ENCODE measurements at regions of chr5 and their contacts with region 1.

Region 1: DNA sequence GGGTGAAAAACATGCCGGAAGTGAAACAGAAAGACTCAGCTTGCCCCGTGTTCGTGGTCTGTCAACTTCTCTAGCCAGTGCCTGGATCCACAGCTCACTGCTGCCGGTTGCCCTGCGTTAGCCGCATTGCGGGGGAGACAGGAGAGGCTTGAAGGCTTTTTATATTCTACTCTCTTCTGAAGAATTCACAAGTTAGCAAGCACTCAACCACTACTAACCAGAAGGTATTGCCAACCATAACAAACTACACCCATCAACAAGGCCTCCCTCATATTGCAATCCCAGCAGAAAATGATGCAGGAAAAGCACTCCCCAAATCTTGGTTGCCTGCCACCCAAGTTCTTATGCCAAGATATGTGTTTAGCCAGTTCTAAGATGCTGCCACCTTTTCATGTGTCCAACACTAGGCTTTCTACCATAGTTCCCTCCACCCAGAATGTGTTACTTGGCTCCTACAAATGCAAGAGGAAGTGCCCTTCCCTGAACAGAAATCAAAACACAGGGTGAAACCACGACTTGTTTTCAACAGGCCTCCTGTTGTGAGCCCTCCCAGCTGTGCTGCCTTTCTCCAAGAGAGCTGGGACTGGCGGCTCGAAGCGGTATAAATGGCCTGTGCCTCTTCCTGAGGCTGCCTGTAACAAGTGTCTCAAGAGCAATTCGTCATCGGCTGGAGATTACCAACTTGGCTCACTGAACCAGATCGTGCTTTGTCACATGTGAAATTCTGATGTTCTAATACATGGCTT is 129.0 kb downstream of the SNX18 start:
- DNase-seq: peak; percentile 18 to 81 (median 70)
- ATAC-seq: peak; percentile 88
- H3K4me3 ChIP-seq: peak overlapping the region; percentile 44
- H3K4me3 Mint-ChIP-seq: peak overlapping the region; percentile 63 to 85 (median 80)
- H3K27ac ChIP-seq: peak overlapping the region; percentile 64
- H3K27ac Mint-ChIP-seq: peak overlapping the region; percentile 94 to 99 (median 97)
- H3K4me1 ChIP-seq: peaks cover 44 to 48% of the 10 kb centered on the region in 2 donors
- H3K4me1 Mint-ChIP-seq: peaks cover 41 to 72% (median 60%) of the 10 kb centered on the region in 7 donors
- H3K27me3 ChIP-seq: no peaks in the 10 kb centered on the region
- H3K27me3 Mint-ChIP-seq: no peaks in the 10 kb centered on the region

Region 2: DNA sequence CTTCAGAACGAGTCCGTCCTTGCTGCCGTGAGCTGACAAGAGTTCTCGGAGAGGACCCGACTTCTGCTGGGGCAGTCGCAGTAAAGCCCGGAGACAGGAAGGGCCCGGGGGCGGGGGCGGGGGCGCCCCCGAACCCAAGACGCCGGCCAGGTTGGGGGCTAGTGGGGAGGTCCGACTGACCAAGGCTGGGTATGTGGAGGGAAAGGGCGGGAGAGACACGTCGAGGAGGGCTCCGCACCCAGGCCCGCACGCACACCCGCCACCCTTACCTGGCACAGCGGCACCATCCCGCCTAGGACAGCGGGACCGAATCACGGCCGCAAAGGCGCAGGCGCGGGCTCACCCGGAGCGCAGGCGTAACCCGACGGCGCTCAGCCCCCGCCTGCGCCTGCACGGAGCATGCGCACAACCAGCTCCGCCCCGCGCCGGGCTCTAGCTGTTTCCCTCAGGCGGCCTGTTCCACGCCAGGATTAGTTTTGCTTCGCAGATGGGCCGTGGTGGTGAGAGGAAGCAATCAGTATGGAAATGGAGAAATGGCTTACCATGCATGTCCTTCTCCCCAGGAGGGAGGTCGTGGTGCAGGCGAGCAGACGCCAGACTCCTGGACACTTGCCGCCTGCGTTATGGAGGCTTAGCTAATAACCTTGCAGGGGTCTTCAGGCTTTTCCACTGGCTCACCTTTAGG is 1536.9 kb before region 1 on chr5 and contains the start of gene MOCS2:
- CTCF ChIA-PET with region 1: no interaction called
- POLR2A ChIA-PET with region 1: no interaction called
- intact Hi-C with region 1: loop called in 1 of 2 experiments (anchors 1 kb)
- DNase-seq: peak; percentile 87 to 93 (median 91)
- ATAC-seq: peak; percentile 98
- H3K4me3 ChIP-seq: peak within 1 kb of the TSS; percentile 88
- H3K4me3 Mint-ChIP-seq: peak within 1 kb of the TSS; percentile 93 to 99 (median 96)
- H3K27ac ChIP-seq: peak within 1 kb of the TSS; percentile 84
- H3K27ac Mint-ChIP-seq: peak within 1 kb of the TSS; percentile 86 to 98 (median 93)
- H3K4me1 ChIP-seq: peaks cover 6 to 7% of the 10 kb centered on the region in 2 donors
- H3K4me1 Mint-ChIP-seq: peaks cover 29 to 64% (median 60%) of the 10 kb centered on the region in 7 donors
- H3K27me3 ChIP-seq: no peaks in the 10 kb centered on the region
- H3K27me3 Mint-ChIP-seq: no peaks in the 10 kb centered on the region
- total RNA-seq, gene MOCS2: 12.8 to 29.8 (median 20.9) TPM

Region 3: DNA sequence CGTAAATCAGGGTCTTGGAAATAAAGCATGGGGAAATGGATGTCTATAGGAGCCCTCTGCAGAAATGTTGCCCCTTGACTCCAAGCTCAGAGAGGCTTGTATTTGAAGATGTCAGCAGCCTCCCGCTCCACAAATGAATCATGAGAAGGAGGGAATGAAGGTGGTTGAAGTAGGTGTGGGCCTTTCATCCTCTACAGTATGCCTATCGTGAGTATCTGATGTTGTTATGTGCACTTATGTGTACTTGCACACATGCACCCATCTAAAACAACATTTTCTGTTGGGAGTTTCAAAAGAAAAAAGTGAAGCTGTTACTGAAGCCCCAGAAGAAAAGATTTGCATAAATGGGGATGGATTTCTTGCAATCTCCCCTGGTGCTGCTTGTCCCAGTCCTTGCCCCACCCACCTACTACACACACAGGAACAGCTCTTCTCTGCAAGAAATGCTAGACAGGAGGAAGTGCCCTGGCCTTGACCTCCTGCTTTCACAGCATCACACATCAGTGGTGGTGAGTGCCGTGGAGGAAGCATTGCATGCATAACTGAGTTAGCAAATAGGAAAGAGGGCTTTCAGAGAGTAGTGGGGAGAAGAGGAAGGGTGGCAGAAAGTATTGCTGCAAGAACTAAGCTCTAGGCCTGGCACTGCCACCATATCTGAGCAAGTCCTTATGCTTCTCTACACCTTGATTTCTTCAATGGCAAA is 27.1 kb after region 1 on chr5:
- CTCF ChIA-PET with region 1: interaction called, 4 read pairs
- POLR2A ChIA-PET with region 1: interaction called, 8 read pairs
- intact Hi-C with region 1: loop called (anchors 1 kb)
- DNase-seq: peak in 7 of 9 donors; percentile 32 to 52 (median 39)
- ATAC-seq: peak; percentile 88
- H3K4me3 ChIP-seq: no peak overlapping the region
- H3K4me3 Mint-ChIP-seq: peak overlapping the region in 9 of 10 donors; percentile 9 to 67 (median 45)
- H3K27ac ChIP-seq: no peak overlapping the region
- H3K27ac Mint-ChIP-seq: peak overlapping the region; percentile 11 to 83 (median 56)
- H3K4me1 ChIP-seq: peaks cover 35 to 36% of the 10 kb centered on the region in 2 donors
- H3K4me1 Mint-ChIP-seq: peaks cover 40 to 74% (median 58%) of the 10 kb centered on the region in 7 donors
- H3K27me3 ChIP-seq: no peaks in the 10 kb centered on the region
- H3K27me3 Mint-ChIP-seq: peaks cover 0 to 5% (median 0%) of the 10 kb centered on the region in 5 donors

Region 4: GRCh38 chr5:54719384-54720283 is 73.1 kb after region 1 on chr5:
- CTCF ChIA-PET with region 1: no interaction called
- POLR2A ChIA-PET with region 1: no interaction called
- intact Hi-C with region 1: loop called in 1 of 2 experiments (anchors 1 kb)
- DNase-seq: no peak
- ATAC-seq: no peak
- H3K4me3 ChIP-seq: no peak overlapping the region
- H3K4me3 Mint-ChIP-seq: no peak overlapping the region
- H3K27ac ChIP-seq: no peak overlapping the region
- H3K27ac Mint-ChIP-seq: peak overlapping the region in 1 of 9 donors; percentile 14
- H3K4me1 ChIP-seq: no peaks in the 10 kb centered on the region
- H3K4me1 Mint-ChIP-seq: peaks cover 0 to 33% (median 5%) of the 10 kb centered on the region in 7 donors
- H3K27me3 ChIP-seq: no peaks in the 10 kb centered on the region
- H3K27me3 Mint-ChIP-seq: peaks cover 0 to 5% (median 0%) of the 10 kb centered on the region in 5 donors

Region 5: DNA sequence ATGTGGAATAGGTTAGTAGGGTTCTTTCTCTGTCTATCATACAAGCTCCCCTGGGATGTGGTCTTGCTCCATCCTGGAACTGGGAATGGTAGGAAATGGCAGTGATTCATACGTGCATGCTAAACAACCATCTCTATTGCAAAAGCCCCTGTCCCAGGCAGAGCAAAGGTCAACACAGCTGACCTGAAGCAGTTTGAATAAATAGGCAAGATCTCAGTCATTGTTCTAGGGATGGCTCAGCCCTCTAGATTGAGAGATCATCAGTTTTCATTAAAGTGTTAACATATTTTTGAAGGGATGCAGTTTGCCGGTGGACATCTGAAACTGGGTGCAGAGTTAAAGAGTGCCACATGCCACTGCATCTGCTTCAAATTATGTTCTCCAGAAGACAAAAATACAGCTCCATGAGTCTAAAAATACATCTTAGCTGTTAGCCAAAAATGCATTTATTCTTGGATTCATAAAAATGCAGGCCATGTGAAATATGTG is 114.7 kb after region 1 on chr5:
- CTCF ChIA-PET with region 1: no interaction called
- POLR2A ChIA-PET with region 1: no interaction called
- intact Hi-C with region 1: loop called in 1 of 2 experiments (anchors 5 kb)
- DNase-seq: no peak
- ATAC-seq: no peak
- H3K4me3 ChIP-seq: no peak overlapping the region
- H3K4me3 Mint-ChIP-seq: no peak overlapping the region
- H3K27ac ChIP-seq: no peak overlapping the region
- H3K27ac Mint-ChIP-seq: no peak overlapping the region
- H3K4me1 ChIP-seq: peaks cover 7 to 8% of the 10 kb centered on the region in 2 donors
- H3K4me1 Mint-ChIP-seq: peaks cover 9 to 26% (median 10%) of the 10 kb centered on the region in 7 donors
- H3K27me3 ChIP-seq: no peaks in the 10 kb centered on the region
- H3K27me3 Mint-ChIP-seq: peaks cover 0 to 8% (median 0%) of the 10 kb centered on the region in 5 donors

Region 6: DNA sequence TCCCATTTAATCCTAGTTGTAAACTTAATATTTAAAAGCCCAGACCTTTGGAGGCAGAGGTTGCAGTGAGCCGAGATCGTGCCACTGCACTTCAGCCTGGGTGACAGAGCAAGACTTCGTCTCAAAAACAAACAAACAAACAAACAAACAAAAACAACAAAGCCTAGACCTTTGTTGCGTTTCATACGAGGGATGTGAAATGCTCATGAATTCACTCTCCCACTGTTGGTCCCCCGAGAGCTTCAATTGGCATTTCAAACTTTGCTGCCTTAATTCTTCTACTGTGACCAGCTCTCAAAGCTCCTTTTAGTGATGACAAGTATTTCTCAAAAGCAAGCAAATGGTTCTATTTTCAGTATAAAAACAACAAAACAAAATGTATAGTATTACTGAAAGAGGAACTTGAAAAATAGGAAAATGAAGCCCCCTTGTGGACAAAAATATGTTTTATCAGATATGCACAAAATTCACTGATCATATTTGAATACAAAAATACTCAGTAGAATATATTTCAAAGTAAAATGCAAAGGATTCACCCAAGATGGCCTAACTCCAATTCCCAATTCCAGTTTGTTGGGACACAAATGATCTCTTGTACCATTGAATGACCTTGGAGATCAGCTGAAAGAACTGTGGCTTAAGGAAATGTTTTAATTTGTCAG is 198.5 kb after region 1 on chr5:
- CTCF ChIA-PET with region 1: interaction called, 5 read pairs
- POLR2A ChIA-PET with region 1: interaction called, 15 read pairs
- intact Hi-C with region 1: loop called (anchors 1 to 10 kb)
- DNase-seq: peak in 6 of 9 donors; percentile 38 to 67 (median 60)
- ATAC-seq: peak; percentile 34
- H3K4me3 ChIP-seq: no peak overlapping the region
- H3K4me3 Mint-ChIP-seq: peak overlapping the region in 7 of 10 donors; percentile 2 to 68 (median 52)
- H3K27ac ChIP-seq: no peak overlapping the region
- H3K27ac Mint-ChIP-seq: peak overlapping the region in 6 of 9 donors; percentile 45 to 63 (median 56)
- H3K4me1 ChIP-seq: no peaks in the 10 kb centered on the region
- H3K4me1 Mint-ChIP-seq: peaks cover 0 to 21% (median 5%) of the 10 kb centered on the region in 7 donors
- H3K27me3 ChIP-seq: no peaks in the 10 kb centered on the region
- H3K27me3 Mint-ChIP-seq: peaks cover 8 to 18% (median 12%) of the 10 kb centered on the region in 5 donors

Region 7: GRCh38 chr5:55096861-55097260 is 450.3 kb after region 1 on chr5:
- CTCF ChIA-PET with region 1: no interaction called
- POLR2A ChIA-PET with region 1: no interaction called
- intact Hi-C with region 1: loop called in 1 of 2 experiments (anchors 5 kb)
- DNase-seq: peak in 7 of 9 donors; percentile 61 to 83 (median 74)
- ATAC-seq: peak; percentile 85
- H3K4me3 ChIP-seq: peak overlapping the region; percentile 33
- H3K4me3 Mint-ChIP-seq: peak overlapping the region; percentile 16 to 79 (median 70)
- H3K27ac ChIP-seq: peak overlapping the region; percentile 59
- H3K27ac Mint-ChIP-seq: peak overlapping the region; percentile 88 to 100 (median 94)
- H3K4me1 ChIP-seq: peaks cover 42 to 52% of the 10 kb centered on the region in 2 donors
- H3K4me1 Mint-ChIP-seq: peaks cover 50 to 95% (median 90%) of the 10 kb centered on the region in 7 donors
- H3K27me3 ChIP-seq: no peaks in the 10 kb centered on the region
- H3K27me3 Mint-ChIP-seq: no peaks in the 10 kb centered on the region

Region 8: GRCh38 chr5:55497712-55498111 is 851.2 kb after region 1 on chr5:
- CTCF ChIA-PET with region 1: no interaction called
- POLR2A ChIA-PET with region 1: no interaction called
- intact Hi-C with region 1: no loop called
- DNase-seq: no peak
- ATAC-seq: no peak
- H3K4me3 ChIP-seq: no peak overlapping the region
- H3K4me3 Mint-ChIP-seq: no peak overlapping the region
- H3K27ac ChIP-seq: no peak overlapping the region
- H3K27ac Mint-ChIP-seq: peak overlapping the region in 1 of 9 donors; percentile 62
- H3K4me1 ChIP-seq: no peaks in the 10 kb centered on the region
- H3K4me1 Mint-ChIP-seq: peaks cover 3 to 30% (median 20%) of the 10 kb centered on the region in 7 donors
- H3K27me3 ChIP-seq: no peaks in the 10 kb centered on the region
- H3K27me3 Mint-ChIP-seq: no peaks in the 10 kb centered on the region